ENCODE measurements at regions of chr1 and their contacts with region 1.

Region 1: DNA sequence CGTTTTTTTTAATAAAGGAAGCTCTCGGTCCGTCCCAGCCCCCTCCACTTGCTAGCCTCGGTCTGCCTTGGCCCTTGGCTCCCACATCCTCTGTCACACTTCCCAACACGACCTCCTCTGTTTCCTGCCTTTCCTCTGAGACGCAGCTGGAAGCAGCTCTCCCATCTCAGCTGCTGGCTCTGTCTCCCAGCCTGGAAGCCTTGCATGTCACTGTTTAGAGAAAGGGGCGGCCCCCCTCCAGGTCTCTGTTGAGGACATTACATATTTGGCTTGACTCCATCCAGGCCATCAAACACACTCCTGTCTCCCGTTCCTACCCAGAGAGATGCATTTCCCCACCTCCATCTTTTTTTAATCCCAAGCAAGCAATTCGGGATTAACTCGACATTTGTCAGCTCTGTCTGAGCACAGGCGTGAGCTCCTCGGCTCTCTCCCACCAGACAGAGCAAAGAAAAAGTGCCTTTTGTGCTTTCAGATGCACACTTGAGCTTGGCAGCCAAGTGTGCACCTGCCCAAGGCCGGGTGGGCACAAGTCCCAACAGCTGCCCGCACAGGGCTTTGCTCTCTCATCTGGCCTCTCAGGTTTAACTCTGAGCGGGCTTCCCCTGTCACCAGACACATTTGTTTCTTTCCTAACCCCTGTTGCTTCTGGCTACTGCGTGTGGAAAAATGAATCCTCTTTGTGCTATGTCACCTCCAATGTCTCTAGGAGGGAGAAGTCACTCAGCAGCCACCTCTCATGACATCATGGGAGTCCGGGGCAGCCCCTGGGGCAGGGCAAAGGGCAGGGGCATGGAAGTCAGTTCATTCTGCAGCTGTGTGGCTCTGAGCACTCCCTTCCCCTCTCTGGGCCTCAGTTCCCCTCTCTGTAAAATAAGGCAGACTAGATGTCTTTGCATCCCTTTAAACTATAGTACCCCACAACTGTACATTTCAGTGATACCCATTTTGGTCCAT is 108.3 kb downstream of the KCND3 start:
- DNase-seq: peak; percentile 60 to 67 (median 64)
- ATAC-seq: peak; percentile 45 to 77 (median 68)
- H3K4me3 ChIP-seq: no peak overlapping the region
- H3K27ac ChIP-seq: peak overlapping the region in 1 of 3 donors; percentile 15
- H3K4me1 ChIP-seq: peaks cover 0 to 26% (median 4%) of the 10 kb centered on the region in 4 donors
- H3K27me3 ChIP-seq: no peaks in the 10 kb centered on the region
- CTCF ChIP-seq: no peak
- POLR2A ChIP-seq: no peak

Region 2: DNA sequence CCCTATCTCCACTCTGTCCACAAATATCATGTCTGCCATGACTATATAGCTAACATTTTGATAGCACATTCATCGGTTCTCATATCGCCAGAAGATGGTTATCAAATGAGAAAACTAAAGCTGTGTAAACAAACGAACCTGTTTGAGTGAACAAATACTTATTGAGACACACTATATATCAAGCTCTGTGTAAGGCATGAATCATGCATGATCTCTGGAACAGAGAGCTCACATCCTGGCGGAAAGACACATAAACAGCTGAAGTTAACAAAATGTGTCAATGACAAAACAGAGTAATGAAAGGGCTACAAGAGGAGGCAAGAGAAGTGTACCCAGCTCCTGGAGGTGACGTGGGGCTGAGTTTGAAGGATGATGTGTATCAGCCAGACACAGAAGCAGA is 95.2 kb after region 1 on chr1:
- intact Hi-C with region 1: loop called in 1 of 2 experiments (anchors 10 kb)
- DNase-seq: no peak
- ATAC-seq: peak; percentile 29 to 73 (median 56)
- H3K4me3 ChIP-seq: no peak overlapping the region
- H3K27ac ChIP-seq: no peak overlapping the region
- H3K4me1 ChIP-seq: peaks cover 2 to 44% (median 19%) of the 10 kb centered on the region in 4 donors
- H3K27me3 ChIP-seq: no peaks in the 10 kb centered on the region
- CTCF ChIP-seq: no peak
- POLR2A ChIP-seq: no peak

Measured in right lobe of liver (tissue), 6 donors.